Naive thymus-derived CD4-positive, alpha-beta T cell (primary cell): ENCODE measurements at regions of chr2 and their contacts with region 1.

Region 1: GRCh38 chr2:215454519-215455246 is 18.8 kb upstream of the FN1 start:
- DNase-seq: peak in 3 of 9 donors; percentile 15 to 36 (median 26)
- ATAC-seq: peak; percentile 44
- H3K4me3 ChIP-seq: no peak overlapping the region
- H3K4me3 Mint-ChIP-seq: no peak overlapping the region
- H3K27ac ChIP-seq: no peak overlapping the region
- H3K27ac Mint-ChIP-seq: no peak overlapping the region
- H3K4me1 ChIP-seq: no peaks in the 10 kb centered on the region
- H3K4me1 Mint-ChIP-seq: no peaks in the 10 kb centered on the region
- H3K27me3 ChIP-seq: no peaks in the 10 kb centered on the region
- H3K27me3 Mint-ChIP-seq: peaks cover 8 to 25% (median 17%) of the 10 kb centered on the region in 5 donors

Region 2: GRCh38 chr2:215782965-215783364 is 328.3 kb after region 1 on chr2:
- CTCF ChIA-PET with region 1: no interaction called
- POLR2A ChIA-PET with region 1: no interaction called
- intact Hi-C with region 1: loop called in 1 of 2 experiments (anchors 1 kb)
- DNase-seq: peak in 1 of 9 donors; percentile 2
- ATAC-seq: no peak
- H3K4me3 ChIP-seq: no peak overlapping the region
- H3K4me3 Mint-ChIP-seq: no peak overlapping the region
- H3K27ac ChIP-seq: no peak overlapping the region
- H3K27ac Mint-ChIP-seq: no peak overlapping the region
- H3K4me1 ChIP-seq: no peaks in the 10 kb centered on the region
- H3K4me1 Mint-ChIP-seq: no peaks in the 10 kb centered on the region
- H3K27me3 ChIP-seq: no peaks in the 10 kb centered on the region
- H3K27me3 Mint-ChIP-seq: peaks cover 0 to 10% (median 5%) of the 10 kb centered on the region in 5 donors

Region 3: DNA sequence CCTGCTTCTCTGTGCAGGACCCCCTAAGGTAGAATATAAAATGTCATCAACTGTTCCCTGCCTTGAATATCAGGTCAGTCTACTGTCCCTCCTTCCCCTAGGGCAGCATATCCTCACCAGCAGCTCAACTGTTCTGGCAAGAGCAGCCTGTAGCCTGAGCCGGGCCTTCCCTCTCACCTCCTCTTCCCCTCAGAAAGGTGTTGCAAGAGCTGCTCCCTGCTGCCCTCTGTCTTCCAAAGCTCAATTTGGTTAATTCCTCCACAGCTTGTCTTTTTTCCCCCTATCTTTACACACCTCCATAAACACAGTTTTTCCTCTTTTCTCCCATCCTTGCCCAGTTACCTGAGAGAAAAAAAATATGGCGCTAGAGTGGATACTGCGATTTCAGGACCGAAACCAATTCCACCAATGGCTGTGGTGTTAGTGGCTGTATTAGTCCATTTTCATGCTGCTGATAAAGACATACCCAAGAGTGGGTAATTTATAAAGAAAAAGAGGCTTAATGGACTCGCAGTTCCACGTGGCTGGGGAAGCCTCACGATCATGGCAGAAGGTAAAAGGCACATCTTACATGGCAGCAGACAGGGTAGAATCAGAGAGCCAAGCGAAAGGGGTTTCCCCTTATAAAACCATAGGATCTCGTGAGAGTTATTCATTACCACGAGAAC is 374.0 kb after region 1 on chr2:
- CTCF ChIA-PET with region 1: interaction called, 16 read pairs
- POLR2A ChIA-PET with region 1: no interaction called
- intact Hi-C with region 1: loop called (anchors 1 kb)
- DNase-seq: peak in 8 of 9 donors; percentile 8 to 46 (median 42)
- ATAC-seq: peak; percentile 80
- H3K4me3 ChIP-seq: no peak overlapping the region
- H3K4me3 Mint-ChIP-seq: no peak overlapping the region
- H3K27ac ChIP-seq: no peak overlapping the region
- H3K27ac Mint-ChIP-seq: peak overlapping the region in 1 of 9 donors; percentile 3
- H3K4me1 ChIP-seq: no peaks in the 10 kb centered on the region
- H3K4me1 Mint-ChIP-seq: peaks cover 0 to 11% (median 5%) of the 10 kb centered on the region in 7 donors
- H3K27me3 ChIP-seq: no peaks in the 10 kb centered on the region
- H3K27me3 Mint-ChIP-seq: peaks cover 0 to 13% (median 0%) of the 10 kb centered on the region in 5 donors

Region 4: GRCh38 chr2:215920244-215921100 is 465.8 kb after region 1 on chr2:
- CTCF ChIA-PET with region 1: interaction called, 7 read pairs
- POLR2A ChIA-PET with region 1: no interaction called
- intact Hi-C with region 1: loop called (anchors 1 kb)
- DNase-seq: peak; percentile 19 to 62 (median 45)
- ATAC-seq: peak; percentile 88
- H3K4me3 ChIP-seq: no peak overlapping the region
- H3K4me3 Mint-ChIP-seq: no peak overlapping the region
- H3K27ac ChIP-seq: no peak overlapping the region
- H3K27ac Mint-ChIP-seq: no peak overlapping the region
- H3K4me1 ChIP-seq: no peaks in the 10 kb centered on the region
- H3K4me1 Mint-ChIP-seq: peaks cover 0 to 5% (median 0%) of the 10 kb centered on the region in 7 donors
- H3K27me3 ChIP-seq: no peaks in the 10 kb centered on the region
- H3K27me3 Mint-ChIP-seq: peaks cover 0 to 14% (median 7%) of the 10 kb centered on the region in 5 donors

Region 5: GRCh38 chr2:215931256-215931903 is 476.7 kb after region 1 on chr2:
- CTCF ChIA-PET with region 1: interaction called, 4 read pairs
- POLR2A ChIA-PET with region 1: no interaction called
- intact Hi-C with region 1: loop called in 1 of 2 experiments (anchors 1 kb)
- DNase-seq: peak; percentile 9 to 53 (median 38)
- ATAC-seq: peak; percentile 66
- H3K4me3 ChIP-seq: no peak overlapping the region
- H3K4me3 Mint-ChIP-seq: no peak overlapping the region
- H3K27ac ChIP-seq: no peak overlapping the region
- H3K27ac Mint-ChIP-seq: no peak overlapping the region
- H3K4me1 ChIP-seq: no peaks in the 10 kb centered on the region
- H3K4me1 Mint-ChIP-seq: peaks cover 0 to 6% (median 0%) of the 10 kb centered on the region in 7 donors
- H3K27me3 ChIP-seq: no peaks in the 10 kb centered on the region
- H3K27me3 Mint-ChIP-seq: peaks cover 0 to 10% (median 0%) of the 10 kb centered on the region in 5 donors

Region 6: DNA sequence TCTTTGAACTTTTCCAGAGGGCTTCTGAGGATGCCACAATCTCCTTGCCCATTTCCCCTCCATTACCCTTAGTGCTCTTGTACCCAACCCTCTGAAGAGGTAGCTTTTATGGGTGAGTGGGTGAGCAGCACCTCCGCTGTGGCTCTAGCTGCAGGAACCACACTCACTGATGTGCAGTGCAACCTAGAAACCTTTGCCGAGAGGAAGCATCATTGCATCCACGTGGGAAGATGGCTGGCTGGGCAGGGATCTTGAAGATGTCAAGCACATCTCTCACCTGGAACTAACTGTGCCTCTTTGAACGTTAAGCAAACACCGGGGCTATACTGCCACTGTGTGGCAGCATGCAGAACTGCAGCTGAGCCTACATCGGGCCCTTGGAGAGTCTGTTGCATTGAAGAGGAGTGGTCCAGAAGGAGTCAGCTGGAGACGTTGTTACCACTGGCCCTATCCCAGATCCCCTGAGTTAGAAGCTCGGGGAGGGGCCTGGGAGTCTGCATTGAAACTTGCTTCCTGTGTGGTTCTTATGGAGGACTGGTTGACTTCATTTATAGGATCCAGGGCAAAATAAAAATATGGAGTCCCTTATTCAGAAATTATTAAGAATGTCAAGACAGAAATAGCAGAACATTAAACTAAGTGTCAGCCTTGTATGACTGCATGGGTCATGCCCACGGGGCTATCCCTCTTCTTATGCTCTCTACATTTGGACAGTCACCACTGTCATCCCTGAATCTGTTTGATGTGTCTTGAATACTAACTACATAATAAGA is 1212.0 kb after region 1 on chr2:
- CTCF ChIA-PET with region 1: no interaction called
- POLR2A ChIA-PET with region 1: no interaction called
- intact Hi-C with region 1: loop called in 1 of 2 experiments (anchors 2 kb)
- DNase-seq: peak; percentile 36 to 75 (median 62)
- ATAC-seq: peak; percentile 88
- H3K4me3 ChIP-seq: no peak overlapping the region
- H3K4me3 Mint-ChIP-seq: no peak overlapping the region
- H3K27ac ChIP-seq: no peak overlapping the region
- H3K27ac Mint-ChIP-seq: no peak overlapping the region
- H3K4me1 ChIP-seq: no peaks in the 10 kb centered on the region
- H3K4me1 Mint-ChIP-seq: peaks cover 0 to 2% (median 0%) of the 10 kb centered on the region in 7 donors
- H3K27me3 ChIP-seq: no peaks in the 10 kb centered on the region
- H3K27me3 Mint-ChIP-seq: peaks cover 0 to 12% (median 10%) of the 10 kb centered on the region in 5 donors